GM12878 (cell line): ENCODE measurements at regions of chr2 and their contacts with region 1.

Region 1: DNA sequence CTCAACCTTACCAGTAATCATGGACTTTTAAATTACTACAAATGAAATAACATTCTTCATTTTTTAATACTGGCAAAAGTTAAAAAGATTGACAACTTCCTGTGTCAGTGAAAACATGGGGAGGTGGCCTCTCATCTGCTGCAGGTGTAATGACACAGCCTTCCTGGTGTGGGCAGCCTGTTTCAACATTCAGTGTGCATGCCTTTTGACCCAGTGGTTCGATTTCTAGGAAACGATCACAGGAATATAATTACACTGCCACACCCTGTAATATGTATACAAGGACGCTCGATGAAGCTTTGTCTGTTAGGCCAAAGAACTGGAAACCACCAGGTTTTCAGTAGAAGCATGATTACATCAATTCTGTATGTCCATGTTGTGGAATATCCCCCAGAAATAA is 68.7 kb downstream of the MTHFD2 start:
- DNase-seq: no peak
- ATAC-seq: peak; percentile 96
- H3K4me3 ChIP-seq: no peak overlapping the region
- H3K27ac ChIP-seq: no peak overlapping the region
- H3K4me1 ChIP-seq: no peaks in the 10 kb centered on the region
- H3K27me3 ChIP-seq: no peaks in the 10 kb centered on the region
- CTCF ChIP-seq: peak; percentile 54 to 75 (median 62)
- EP300 ChIP-seq: no peak
- POLR2A ChIP-seq: no peak
- RAD21 ChIP-seq: peak; percentile 70

Region 2: DNA sequence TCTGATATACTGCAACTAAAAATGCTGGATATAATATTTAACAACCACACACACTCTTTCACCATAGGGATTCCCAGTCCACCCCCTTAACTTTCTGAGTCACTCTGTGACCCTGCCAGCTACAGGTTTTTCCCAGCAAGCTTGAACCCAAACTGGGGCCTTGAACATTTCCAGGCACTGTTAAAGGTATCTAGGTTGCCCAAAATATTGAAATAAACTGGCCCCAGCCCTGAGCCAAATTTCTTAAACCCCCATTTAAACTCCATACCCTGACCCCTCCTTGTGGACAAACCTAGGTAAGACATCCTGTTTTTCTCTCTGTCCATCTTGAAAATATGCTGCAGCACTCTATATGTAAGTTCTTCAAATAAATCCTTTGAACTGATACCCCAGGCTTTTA is 132.7 kb after region 1 on chr2:
- CTCF ChIA-PET with region 1: interaction called, 11 read pairs
- POLR2A ChIA-PET with region 1: no interaction called
- RAD21 ChIA-PET with region 1: no interaction called
- SMC1A ChIA-PET with region 1: no interaction called
- in situ Hi-C with region 1: no loop called
- intact Hi-C with region 1: loop called (anchors 5 kb)
- DNase-seq: no peak
- ATAC-seq: peak; percentile 92
- H3K4me3 ChIP-seq: no peak overlapping the region
- H3K27ac ChIP-seq: no peak overlapping the region
- H3K4me1 ChIP-seq: no peaks in the 10 kb centered on the region
- H3K27me3 ChIP-seq: no peaks in the 10 kb centered on the region
- CTCF ChIP-seq: peak; percentile 49 to 67 (median 60)
- EP300 ChIP-seq: no peak
- POLR2A ChIP-seq: no peak
- RAD21 ChIP-seq: peak; percentile 74

Region 3: GRCh38 chr2:75064691-75065396 is 797.8 kb after region 1 on chr2:
- CTCF ChIA-PET with region 1: no interaction called
- POLR2A ChIA-PET with region 1: no interaction called
- RAD21 ChIA-PET with region 1: no interaction called
- SMC1A ChIA-PET with region 1: no interaction called
- in situ Hi-C with region 1: no loop called
- intact Hi-C with region 1: no loop called
- DNase-seq: no peak
- ATAC-seq: peak; percentile 91
- H3K4me3 ChIP-seq: no peak overlapping the region
- H3K27ac ChIP-seq: no peak overlapping the region
- H3K4me1 ChIP-seq: no peaks in the 10 kb centered on the region
- H3K27me3 ChIP-seq: no peaks in the 10 kb centered on the region
- CTCF ChIP-seq: peak; percentile 67 to 92 (median 89)
- EP300 ChIP-seq: no peak
- POLR2A ChIP-seq: no peak
- RAD21 ChIP-seq: peak; percentile 78